AG04450 (cell line): ENCODE measurements at regions of chr5 and their contacts with region 1.

Region 1: DNA sequence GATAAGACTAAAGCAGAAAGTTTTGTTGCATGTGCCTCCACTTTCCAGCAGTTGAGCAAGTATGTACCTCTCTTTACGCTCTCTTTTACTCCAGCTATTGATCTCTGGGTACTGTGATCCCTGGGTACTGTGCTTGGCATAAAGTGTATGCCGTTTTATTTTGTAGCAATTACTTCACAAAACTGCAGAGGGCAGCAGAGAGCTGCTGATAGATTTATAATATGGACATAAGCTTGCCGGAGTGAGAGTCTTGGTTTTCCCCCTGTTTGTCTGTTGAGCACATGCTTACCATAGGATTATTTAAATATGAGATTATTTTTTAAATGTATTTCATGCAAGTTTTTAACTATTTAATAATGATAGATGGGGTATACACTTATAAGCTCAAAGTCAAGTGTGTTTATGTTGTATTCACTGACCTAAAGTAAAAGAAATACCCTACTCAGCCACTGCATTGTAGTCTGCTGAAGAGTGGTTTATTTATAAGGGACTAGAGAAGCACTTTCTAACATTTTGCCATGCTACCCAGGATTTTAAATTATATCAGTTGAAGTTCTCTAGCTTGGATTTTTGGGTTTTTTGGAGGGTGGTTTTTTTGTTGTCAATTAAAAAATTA is 13.0 kb downstream of the TTC1 start:
- DNase-seq: peak; percentile 55
- H3K4me3 ChIP-seq: no peak overlapping the region
- H3K27ac ChIP-seq: no peak overlapping the region
- H3K27me3 ChIP-seq: no peaks in the 10 kb centered on the region
- CTCF ChIP-seq: peak; percentile 76

Region 2: GRCh38 chr5:160008877-160009590 is 12.9 kb before region 1 on chr5 and contains the start of gene TTC1:
- CTCF ChIA-PET with region 1: interaction called, 60 read pairs
- POLR2A ChIA-PET with region 1: interaction called, 4 read pairs
- DNase-seq: peak; percentile 98
- H3K4me3 ChIP-seq: peak within 1 kb of the TSS; percentile 81
- H3K27ac ChIP-seq: peak within 1 kb of the TSS; percentile 88
- H3K27me3 ChIP-seq: no peaks in the 10 kb centered on the region
- CTCF ChIP-seq: no peak
- polyA plus RNA-seq, gene TTC1: 44.5 and 53.7 TPM in 2 replicates

Region 3: DNA sequence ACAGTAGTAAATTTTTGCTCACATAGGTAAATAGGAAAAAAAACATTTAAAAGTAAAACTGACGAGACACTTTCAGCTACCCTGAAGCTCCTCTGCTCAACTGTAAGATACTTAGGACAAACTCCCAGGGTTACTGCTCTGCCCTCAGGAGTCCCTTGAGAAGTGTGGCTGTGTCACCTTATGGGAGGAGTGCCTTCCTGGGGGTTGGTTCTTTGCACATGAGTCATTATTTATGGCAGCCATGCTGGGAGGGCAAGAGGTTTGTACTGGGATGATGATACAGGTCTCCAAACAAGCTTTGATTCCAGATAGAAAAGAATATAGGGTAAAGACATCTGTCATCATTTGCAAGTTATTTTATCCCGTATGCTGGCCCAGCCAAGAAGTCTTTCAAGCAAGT is 32.9 kb after region 1 on chr5:
- CTCF ChIA-PET with region 1: interaction called, 32 read pairs
- POLR2A ChIA-PET with region 1: no interaction called
- DNase-seq: no peak
- H3K4me3 ChIP-seq: no peak overlapping the region
- H3K27ac ChIP-seq: no peak overlapping the region
- H3K27me3 ChIP-seq: no peaks in the 10 kb centered on the region
- CTCF ChIP-seq: no peak

Region 4: GRCh38 chr5:160199410-160199911 is 177.5 kb after region 1 on chr5:
- CTCF ChIA-PET with region 1: interaction called, 39 read pairs
- POLR2A ChIA-PET with region 1: no interaction called
- DNase-seq: no peak
- H3K4me3 ChIP-seq: peak overlapping the region; percentile 57
- H3K27ac ChIP-seq: no peak overlapping the region
- H3K27me3 ChIP-seq: no peaks in the 10 kb centered on the region
- CTCF ChIP-seq: peak; percentile 64

Region 5: GRCh38 chr5:160369990-160370712 is 348.2 kb after region 1 on chr5 and contains the start of gene C1QTNF2:
- CTCF ChIA-PET with region 1: interaction called, 23 read pairs
- POLR2A ChIA-PET with region 1: no interaction called
- DNase-seq: peak; percentile 48
- H3K4me3 ChIP-seq: peak within 1 kb of the TSS; percentile 65
- H3K27ac ChIP-seq: peak within 1 kb of the TSS; percentile 2
- H3K27me3 ChIP-seq: peaks cover 14% of the 10 kb centered on the region
- CTCF ChIP-seq: no peak
- polyA plus RNA-seq, gene C1QTNF2: 1.1 TPM in 2 replicates

Region 6: GRCh38 chr5:160399402-160400353 is 377.7 kb after region 1 on chr5 and contains the start of gene FAM200C:
- CTCF ChIA-PET with region 1: interaction called, 180 read pairs
- POLR2A ChIA-PET with region 1: no interaction called
- DNase-seq: peak; percentile 90
- H3K4me3 ChIP-seq: peak within 1 kb of the TSS; percentile 73
- H3K27ac ChIP-seq: peak within 1 kb of the TSS; percentile 92
- H3K27me3 ChIP-seq: no peaks in the 10 kb centered on the region
- CTCF ChIP-seq: no peak
- polyA plus RNA-seq, gene FAM200C: 3.6 and 5.3 TPM in 2 replicates